ENCODE measurements at regions of chrX and their contacts with region 1.

Region 1: DNA sequence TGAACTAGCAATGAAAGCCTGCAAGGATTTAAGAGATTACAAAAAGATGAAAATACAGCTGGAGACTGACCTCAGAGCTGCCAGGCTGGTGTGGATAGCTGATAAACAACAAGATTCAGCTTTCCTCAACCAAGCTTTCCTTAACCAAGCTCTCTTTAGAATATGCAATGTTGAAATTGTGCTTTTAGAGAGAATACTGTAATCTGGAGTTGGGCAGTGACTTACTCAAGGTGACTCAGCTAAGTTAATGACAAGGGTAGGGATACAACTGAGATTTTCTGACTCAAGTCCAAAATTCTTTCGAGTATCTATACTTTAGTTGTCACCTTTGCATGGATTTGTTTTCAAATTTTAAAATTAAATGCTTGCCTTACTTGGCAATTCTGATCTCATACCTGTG is 98.0 kb downstream of the AMMECR1 start:
- DNase-seq: peak; percentile 73
- ATAC-seq: peak; percentile 87
- H3K4me3 ChIP-seq: peak overlapping the region; percentile 32; the same call in 1 of the 2 replicates
- H3K27ac ChIP-seq: peak overlapping the region; percentile 73
- H3K4me1 ChIP-seq: peaks cover 39% of the 10 kb centered on the region
- H3K27me3 ChIP-seq: no peaks in the 10 kb centered on the region
- CTCF ChIP-seq: no peak

Region 2: DNA sequence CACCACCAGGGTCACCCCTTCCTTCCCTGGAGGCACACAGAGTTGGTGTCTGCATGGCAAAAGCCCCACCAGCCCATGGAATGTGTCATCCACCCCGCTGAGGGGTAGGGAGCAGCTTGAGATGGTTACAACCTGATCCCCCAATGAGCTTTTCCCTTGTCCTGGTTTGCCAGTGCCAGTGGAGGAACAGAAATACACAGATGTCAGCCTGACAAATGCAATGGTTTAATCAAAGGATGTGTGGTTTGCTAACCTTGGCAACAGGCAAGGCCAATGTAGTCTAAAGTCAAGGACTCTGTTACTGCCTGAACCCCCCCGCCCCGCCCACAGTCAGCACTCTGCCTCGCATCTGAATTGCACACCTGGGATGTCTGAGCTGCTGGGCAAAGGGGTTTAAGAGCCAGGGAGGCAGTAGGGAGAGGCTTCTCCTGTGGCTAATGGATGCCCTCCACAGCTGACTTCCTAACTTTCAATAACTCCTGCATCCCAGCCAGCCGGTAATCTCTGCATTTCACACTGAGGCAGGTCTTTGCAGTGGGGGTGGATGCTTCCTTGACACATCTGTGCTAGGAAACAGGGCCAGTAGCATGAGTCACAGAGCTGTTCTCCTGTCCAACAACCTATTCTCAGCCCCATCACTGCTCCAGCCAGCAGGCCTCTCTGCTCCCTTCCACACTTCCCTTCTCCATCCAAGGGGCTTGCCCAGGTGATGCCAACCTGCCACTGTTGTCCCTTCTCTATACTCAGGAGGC is 39.6 kb before region 1 on chrX:
- CTCF ChIA-PET with region 1: no interaction called
- POLR2A ChIA-PET with region 1: no interaction called
- intact Hi-C with region 1: loop called (anchors 5 kb)
- DNase-seq: peak; percentile 65
- ATAC-seq: peak; percentile 88
- H3K4me3 ChIP-seq: peak overlapping the region; percentile 46; the same call in 1 of the 2 replicates
- H3K27ac ChIP-seq: peak overlapping the region; percentile 98
- H3K4me1 ChIP-seq: peaks cover 42% of the 10 kb centered on the region
- H3K27me3 ChIP-seq: no peaks in the 10 kb centered on the region
- CTCF ChIP-seq: no peak

Region 3: GRCh38 chrX:110284159-110284558 is 64.2 kb after region 1 on chrX:
- CTCF ChIA-PET with region 1: no interaction called
- POLR2A ChIA-PET with region 1: interaction called, 5 read pairs
- intact Hi-C with region 1: loop called (anchors 5 kb)
- DNase-seq: peak; percentile 83
- ATAC-seq: peak; percentile 68
- H3K4me3 ChIP-seq: no peak overlapping the region
- H3K27ac ChIP-seq: peak overlapping the region; percentile 92
- H3K4me1 ChIP-seq: peaks cover 59% of the 10 kb centered on the region
- H3K27me3 ChIP-seq: no peaks in the 10 kb centered on the region
- CTCF ChIP-seq: no peak